Dendritic cell treated with granulocyte-macrophage colony-stimulating factor and Interleukin-4, amounts not matched to agents 40 ng/mL and 50 ng/mL, for 4 days (primary cell): ENCODE measurements at regions of chr18 and their contacts with region 1.

Region 1: DNA sequence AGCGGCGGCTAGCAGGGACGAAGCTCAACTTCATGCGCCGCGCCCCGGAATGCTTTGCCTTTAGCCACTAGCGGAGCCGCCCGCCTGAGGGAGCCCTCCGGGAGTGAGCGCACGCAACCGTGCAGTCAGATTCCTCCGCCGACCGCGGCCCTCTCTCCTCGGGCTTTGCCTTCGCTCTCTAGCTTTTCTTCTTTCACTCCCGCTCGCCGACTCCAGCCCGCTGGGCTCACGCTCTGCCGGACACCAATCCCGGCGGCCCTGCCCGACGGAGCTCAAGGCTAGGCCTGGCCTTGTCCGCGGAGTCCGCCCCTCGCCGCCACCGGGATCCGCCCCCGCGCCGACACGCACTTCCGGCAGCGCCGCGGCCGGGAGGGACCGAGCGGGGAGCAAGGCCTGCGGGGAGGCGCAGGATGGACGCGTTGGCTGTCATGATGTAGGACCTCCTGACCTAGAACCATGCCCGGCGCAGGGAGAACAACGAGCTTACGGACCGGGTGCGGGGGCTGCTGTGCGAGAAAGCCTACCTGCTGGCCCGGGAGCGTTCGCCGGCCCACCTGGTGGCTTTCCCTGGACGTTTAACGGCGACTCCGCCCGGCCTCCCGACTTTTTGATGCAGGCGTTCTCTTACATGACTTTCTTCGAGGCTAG is 40.8 kb upstream of the AKAIN1 start:
- H3K4me3 Mint-ChIP-seq: peak overlapping the region; percentile 96
- H3K27ac Mint-ChIP-seq: peak overlapping the region; percentile 100
- H3K4me1 Mint-ChIP-seq: peaks cover 23% of the 10 kb centered on the region
- H3K27me3 Mint-ChIP-seq: peaks cover 12% of the 10 kb centered on the region

Region 2: GRCh38 chr18:5417342-5417741 is 179.5 kb after region 1 on chr18:
- intact Hi-C with region 1: loop called (anchors 10 kb)
- H3K4me3 Mint-ChIP-seq: peak overlapping the region; percentile 24
- H3K27ac Mint-ChIP-seq: peak overlapping the region; percentile 61
- H3K4me1 Mint-ChIP-seq: peaks cover 41% of the 10 kb centered on the region
- H3K27me3 Mint-ChIP-seq: no peaks in the 10 kb centered on the region